Activated CD4-positive, alpha-beta memory T cell treated with anti-CD3 and anti-CD28 coated beads for 36 hours (primary cell): ENCODE measurements at regions of chr2 and their contacts with region 1.

Region 1: GRCh38 chr2:168210895-168211570 is 36.4 kb downstream of the STK39 start:
- DNase-seq: no peak
- H3K4me3 Mint-ChIP-seq: peak overlapping the region; percentile 54
- H3K27ac Mint-ChIP-seq: peak overlapping the region; percentile 98
- H3K4me1 Mint-ChIP-seq: peaks cover 78% of the 10 kb centered on the region
- H3K27me3 Mint-ChIP-seq: no peaks in the 10 kb centered on the region

Region 2: DNA sequence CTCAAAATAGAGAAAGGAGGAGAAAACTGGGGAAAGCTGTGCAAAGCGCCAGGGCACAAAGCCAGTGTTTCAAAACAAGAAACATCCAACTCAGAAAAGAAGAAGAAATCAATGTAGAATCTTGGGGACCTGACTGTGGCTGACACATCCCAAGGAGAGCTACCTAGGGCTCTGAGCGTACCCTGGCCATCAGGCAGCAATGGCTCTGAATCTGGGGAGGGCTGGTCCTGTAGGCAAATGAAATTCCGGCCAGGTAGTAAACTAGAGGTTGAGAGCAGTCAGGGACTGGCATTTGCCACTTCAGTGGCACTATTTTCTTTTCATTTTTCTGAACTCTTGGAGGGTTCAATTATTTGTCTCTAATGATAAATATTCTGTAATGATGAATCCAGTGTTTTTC is 489.4 kb before region 1 on chr2:
- CTCF ChIA-PET with region 1: no interaction called
- POLR2A ChIA-PET with region 1: no interaction called
- intact Hi-C with region 1: no loop called
- DNase-seq: no peak
- H3K4me3 Mint-ChIP-seq: no peak overlapping the region
- H3K27ac Mint-ChIP-seq: no peak overlapping the region
- H3K4me1 Mint-ChIP-seq: no peaks in the 10 kb centered on the region
- H3K27me3 Mint-ChIP-seq: no peaks in the 10 kb centered on the region

Region 3: GRCh38 chr2:167862787-167863186 is 348.2 kb before region 1 on chr2:
- CTCF ChIA-PET with region 1: no interaction called
- POLR2A ChIA-PET with region 1: no interaction called
- intact Hi-C with region 1: loop called (anchors 2 kb)
- DNase-seq: peak; percentile 25
- H3K4me3 Mint-ChIP-seq: no peak overlapping the region
- H3K27ac Mint-ChIP-seq: no peak overlapping the region
- H3K4me1 Mint-ChIP-seq: peaks cover 12% of the 10 kb centered on the region
- H3K27me3 Mint-ChIP-seq: peaks cover 2% of the 10 kb centered on the region

Region 4: DNA sequence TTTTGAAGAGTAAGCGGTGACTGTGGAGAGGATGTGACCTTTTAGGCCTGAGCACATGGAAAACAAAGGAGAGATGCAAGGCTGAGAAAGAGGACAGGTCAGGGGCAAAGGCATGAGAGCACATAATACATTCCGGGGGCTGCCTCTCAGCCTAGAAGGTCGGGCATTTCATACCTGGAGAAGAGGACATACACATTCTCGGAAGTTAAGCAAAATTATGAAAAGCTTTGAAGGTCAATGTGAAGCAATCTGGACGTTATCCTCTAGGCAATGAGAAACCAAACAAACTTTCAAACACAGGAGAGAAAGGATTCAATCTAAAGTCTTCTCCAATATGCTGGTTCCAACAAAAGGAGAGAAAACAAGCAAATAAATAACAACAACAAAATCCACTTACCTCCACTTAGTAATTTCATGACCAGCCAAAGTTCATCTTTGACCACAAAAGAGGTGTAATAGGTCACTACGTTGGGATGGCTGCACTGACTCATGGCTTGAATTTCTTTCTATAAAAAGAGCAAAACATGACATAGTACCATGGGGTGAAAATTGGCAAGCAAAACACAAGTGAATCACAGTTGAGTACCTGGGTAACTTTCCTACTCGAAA is 44.0 kb before region 1 on chr2:
- CTCF ChIA-PET with region 1: no interaction called
- POLR2A ChIA-PET with region 1: no interaction called
- intact Hi-C with region 1: loop called (anchors 1 kb)
- DNase-seq: peak; percentile 37
- H3K4me3 Mint-ChIP-seq: no peak overlapping the region
- H3K27ac Mint-ChIP-seq: peak overlapping the region; percentile 26
- H3K4me1 Mint-ChIP-seq: peaks cover 39% of the 10 kb centered on the region
- H3K27me3 Mint-ChIP-seq: no peaks in the 10 kb centered on the region

Region 5: GRCh38 chr2:168224346-168224745 is 13.3 kb after region 1 on chr2:
- CTCF ChIA-PET with region 1: no interaction called
- POLR2A ChIA-PET with region 1: interaction called, 8 read pairs
- intact Hi-C with region 1: loop called (anchors 1 kb)
- DNase-seq: no peak
- H3K4me3 Mint-ChIP-seq: no peak overlapping the region
- H3K27ac Mint-ChIP-seq: no peak overlapping the region
- H3K4me1 Mint-ChIP-seq: peaks cover 53% of the 10 kb centered on the region
- H3K27me3 Mint-ChIP-seq: no peaks in the 10 kb centered on the region

Region 6: GRCh38 chr2:168283212-168283611 is 72.2 kb after region 1 on chr2:
- CTCF ChIA-PET with region 1: no interaction called
- POLR2A ChIA-PET with region 1: no interaction called
- intact Hi-C with region 1: no loop called
- DNase-seq: no peak
- H3K4me3 Mint-ChIP-seq: no peak overlapping the region
- H3K27ac Mint-ChIP-seq: no peak overlapping the region
- H3K4me1 Mint-ChIP-seq: no peaks in the 10 kb centered on the region
- H3K27me3 Mint-ChIP-seq: no peaks in the 10 kb centered on the region

Region 7: GRCh38 chr2:168323529-168324021 is 112.5 kb after region 1 on chr2:
- CTCF ChIA-PET with region 1: no interaction called
- POLR2A ChIA-PET with region 1: no interaction called
- intact Hi-C with region 1: loop called (anchors 2 kb)
- DNase-seq: peak; percentile 17
- H3K4me3 Mint-ChIP-seq: no peak overlapping the region
- H3K27ac Mint-ChIP-seq: no peak overlapping the region
- H3K4me1 Mint-ChIP-seq: peaks cover 12% of the 10 kb centered on the region
- H3K27me3 Mint-ChIP-seq: peaks cover 30% of the 10 kb centered on the region